ENCODE measurements at regions of chr20 and their contacts with region 1.

Region 1: GRCh38 chr20:56414842-56415765 is 3.0 kb downstream of the CASS4 start:
- DNase-seq: no peak
- H3K4me3 Mint-ChIP-seq: peak overlapping the region; percentile 48
- H3K27ac Mint-ChIP-seq: peak overlapping the region; percentile 90
- H3K4me1 Mint-ChIP-seq: peaks cover 60% of the 10 kb centered on the region
- H3K27me3 Mint-ChIP-seq: no peaks in the 10 kb centered on the region

Region 2: GRCh38 chr20:56392282-56393137 is 22.6 kb before region 1 on chr20 and contains the start of gene CSTF1:
- intact Hi-C with region 1: loop called (anchors 1 kb)
- DNase-seq: peak; percentile 100
- H3K4me3 Mint-ChIP-seq: no peak within 1 kb of the TSS
- H3K27ac Mint-ChIP-seq: no peak within 1 kb of the TSS
- H3K4me1 Mint-ChIP-seq: peaks cover 40% of the 10 kb centered on the region
- H3K27me3 Mint-ChIP-seq: no peaks in the 10 kb centered on the region
- total RNA-seq, gene CSTF1: 51.2 and 52.1 TPM in 2 replicates

Region 3: DNA sequence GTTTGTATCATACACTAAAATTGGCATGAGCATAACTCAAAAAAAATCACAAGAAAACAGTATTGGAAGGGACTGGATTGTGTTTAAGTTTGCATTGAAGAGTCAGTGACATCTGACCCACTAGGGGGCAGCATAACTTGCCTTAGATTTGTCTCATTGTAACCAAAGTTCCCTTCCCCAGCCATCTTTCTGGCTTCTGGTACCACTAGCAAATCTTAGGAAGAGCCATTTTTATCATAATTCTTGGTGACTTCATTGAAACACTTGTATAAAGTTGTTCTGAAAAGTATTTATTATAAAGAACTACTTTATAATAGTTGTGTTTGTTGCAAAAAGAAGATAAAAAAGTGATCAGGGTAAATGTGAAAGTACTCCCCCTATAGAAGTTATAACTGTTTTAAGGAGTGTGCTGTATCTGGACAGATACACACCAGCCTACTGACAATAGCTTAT is 15.0 kb before region 1 on chr20:
- intact Hi-C with region 1: loop called (anchors 2 kb)
- DNase-seq: no peak
- H3K4me3 Mint-ChIP-seq: no peak overlapping the region
- H3K27ac Mint-ChIP-seq: no peak overlapping the region
- H3K4me1 Mint-ChIP-seq: peaks cover 19% of the 10 kb centered on the region
- H3K27me3 Mint-ChIP-seq: no peaks in the 10 kb centered on the region

Region 4: GRCh38 chr20:56439771-56440291 is 24.7 kb after region 1 on chr20:
- intact Hi-C with region 1: loop called (anchors 1 kb)
- DNase-seq: no peak
- H3K4me3 Mint-ChIP-seq: peak overlapping the region; percentile 65
- H3K27ac Mint-ChIP-seq: peak overlapping the region; percentile 95
- H3K4me1 Mint-ChIP-seq: peaks cover 39% of the 10 kb centered on the region
- H3K27me3 Mint-ChIP-seq: no peaks in the 10 kb centered on the region

Region 5: GRCh38 chr20:56468316-56469082 is 53.4 kb after region 1 on chr20 and contains the start of gene RTF2:
- intact Hi-C with region 1: loop called (anchors 1 kb)
- DNase-seq: peak; percentile 95
- H3K4me3 Mint-ChIP-seq: peak within 1 kb of the TSS; percentile 99
- H3K27ac Mint-ChIP-seq: peak within 1 kb of the TSS; percentile 97
- H3K4me1 Mint-ChIP-seq: peaks cover 36% of the 10 kb centered on the region
- H3K27me3 Mint-ChIP-seq: no peaks in the 10 kb centered on the region
- total RNA-seq, gene RTF2: 103 and 107 TPM in 2 replicates

Measured in activated T-helper 2 cell treated with anti-CD3 and anti-CD28 coated beads, Interferon-gamma antibody, Interleukin-2, Interleukin-4, amounts not matched to agents 10 μg/mL and 5 μg/mL and 100 μg/mL, durations not matched to agents 14 hours and 24 hours and 36 hours (primary cell).